Aorta (tissue), 5 donors: ENCODE measurements at regions of chr12 and their contacts with region 1.

Region 1: GRCh38 chr12:114662512-114663177 is 21.3 kb downstream of the TBX3 start:
- DNase-seq: peak; percentile 80 to 92
- ATAC-seq: peak; percentile 71
- H3K4me3 ChIP-seq: no peak overlapping the region
- H3K27ac ChIP-seq: no peak overlapping the region
- H3K4me1 ChIP-seq: no peaks in the 10 kb centered on the region
- H3K27me3 ChIP-seq: no peaks in the 10 kb centered on the region

Region 2: GRCh38 chr12:114316076-114316475 is 346.6 kb before region 1 on chr12:
- intact Hi-C with region 1: no loop called
- DNase-seq: peak in 1 of 2 donors; percentile 49
- ATAC-seq: no peak
- H3K4me3 ChIP-seq: no peak overlapping the region
- H3K27ac ChIP-seq: no peak overlapping the region
- H3K4me1 ChIP-seq: peaks cover 1 to 4% of the 10 kb centered on the region in 2 donors
- H3K27me3 ChIP-seq: no peaks in the 10 kb centered on the region

Region 3: DNA sequence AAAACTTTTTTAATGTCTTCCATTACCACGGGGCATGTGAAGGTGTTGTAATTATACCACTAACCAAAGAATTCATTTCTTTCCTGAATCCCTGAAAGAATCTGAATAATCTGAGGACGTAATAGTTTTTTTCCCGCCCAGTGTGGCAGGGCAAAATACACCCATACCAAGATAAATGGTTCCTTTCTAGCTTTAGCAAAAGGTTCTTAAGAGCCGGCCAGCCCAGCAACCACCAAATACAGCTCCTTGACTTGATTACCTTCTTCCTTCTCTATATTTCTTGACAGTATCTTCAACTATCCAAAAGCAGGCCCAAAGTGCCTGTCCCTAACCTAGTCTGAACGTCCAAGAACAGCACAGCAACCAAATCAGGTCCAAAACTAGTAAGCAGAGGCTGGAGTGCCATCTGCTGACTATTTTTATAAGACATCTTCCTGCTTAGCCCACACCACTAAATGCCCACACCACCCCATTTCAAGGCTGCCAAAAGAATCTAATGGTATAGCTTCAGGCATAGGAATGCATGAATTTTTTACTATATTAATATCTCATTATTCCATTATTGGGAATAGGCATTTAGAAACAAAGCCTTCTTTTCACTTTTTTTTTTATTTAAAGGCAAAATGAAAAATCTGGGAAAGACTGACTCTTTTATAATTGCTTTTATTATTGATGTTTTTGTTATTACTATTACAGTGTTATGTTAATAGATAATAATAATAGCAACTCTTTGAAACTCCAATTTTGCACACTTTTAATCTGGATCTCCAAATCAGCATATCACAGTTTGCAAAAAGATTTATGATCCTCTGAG is 1090.5 kb after region 1 on chr12:
- intact Hi-C with region 1: loop called (anchors 2 kb)
- DNase-seq: no peak
- ATAC-seq: peak; percentile 86
- H3K4me3 ChIP-seq: no peak overlapping the region
- H3K27ac ChIP-seq: no peak overlapping the region
- H3K4me1 ChIP-seq: no peaks in the 10 kb centered on the region
- H3K27me3 ChIP-seq: no peaks in the 10 kb centered on the region

Region 4: DNA sequence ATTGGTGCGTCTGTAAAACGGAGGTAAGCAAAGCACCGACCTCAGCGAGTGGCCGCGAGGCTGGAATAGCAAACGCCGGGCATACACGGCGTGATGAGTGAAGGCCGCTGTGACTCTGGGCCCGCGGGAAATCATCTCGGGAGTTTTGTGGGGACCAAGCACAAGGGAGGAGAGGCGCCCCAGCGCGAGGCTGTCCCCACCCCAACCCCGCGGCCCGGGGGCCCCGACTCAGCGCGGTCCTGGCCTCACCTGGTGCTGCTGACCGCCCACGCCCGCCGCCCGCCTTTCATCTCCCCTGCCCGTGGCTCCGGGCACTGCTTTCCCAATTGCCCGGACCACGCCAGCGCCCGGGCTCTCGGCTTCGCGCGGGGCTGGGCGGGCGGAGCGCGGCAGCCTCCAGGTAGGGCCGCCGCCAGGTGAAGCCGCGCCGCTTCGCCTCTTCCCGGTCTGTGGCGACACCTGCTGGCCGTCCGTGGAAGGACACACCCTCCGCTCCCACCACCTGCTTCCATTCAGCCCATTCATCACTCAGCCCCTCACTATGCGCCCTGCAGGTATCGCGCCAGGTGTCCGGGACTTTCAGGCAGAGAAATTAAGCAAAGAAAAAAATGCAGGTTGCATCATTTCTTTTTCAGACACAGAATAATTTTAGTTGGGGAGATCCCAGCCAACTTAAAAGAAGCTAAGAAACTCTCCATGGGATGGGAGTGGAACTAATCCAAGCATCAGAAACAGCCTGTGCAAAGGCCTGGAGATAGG is 1254.4 kb after region 1 on chr12:
- intact Hi-C with region 1: loop called (anchors 2 to 5 kb)
- DNase-seq: peak; percentile 62 to 89
- ATAC-seq: peak; percentile 74
- H3K4me3 ChIP-seq: no peak overlapping the region
- H3K27ac ChIP-seq: no peak overlapping the region
- H3K4me1 ChIP-seq: no peaks in the 10 kb centered on the region
- H3K27me3 ChIP-seq: no peaks in the 10 kb centered on the region